ENCODE measurements at regions of chr5 and their contacts with region 1.

Region 1: GRCh38 chr5:120507197-120507596 is 43.1 kb downstream of the PRR16 start:
- DNase-seq: no peak
- H3K4me3 ChIP-seq: no peak overlapping the region
- H3K27ac ChIP-seq: no peak overlapping the region
- H3K4me1 ChIP-seq: no peaks in the 10 kb centered on the region
- H3K27me3 ChIP-seq: no peaks in the 10 kb centered on the region
- CTCF ChIP-seq: no peak

Region 2: GRCh38 chr5:119852140-119852539 is 655.1 kb before region 1 on chr5:
- CTCF ChIA-PET with region 1: no interaction called
- POLR2A ChIA-PET with region 1: no interaction called
- intact Hi-C with region 1: no loop called
- DNase-seq: no peak
- H3K4me3 ChIP-seq: no peak overlapping the region
- H3K27ac ChIP-seq: no peak overlapping the region
- H3K4me1 ChIP-seq: no peaks in the 10 kb centered on the region
- H3K27me3 ChIP-seq: no peaks in the 10 kb centered on the region
- CTCF ChIP-seq: no peak

Region 3: DNA sequence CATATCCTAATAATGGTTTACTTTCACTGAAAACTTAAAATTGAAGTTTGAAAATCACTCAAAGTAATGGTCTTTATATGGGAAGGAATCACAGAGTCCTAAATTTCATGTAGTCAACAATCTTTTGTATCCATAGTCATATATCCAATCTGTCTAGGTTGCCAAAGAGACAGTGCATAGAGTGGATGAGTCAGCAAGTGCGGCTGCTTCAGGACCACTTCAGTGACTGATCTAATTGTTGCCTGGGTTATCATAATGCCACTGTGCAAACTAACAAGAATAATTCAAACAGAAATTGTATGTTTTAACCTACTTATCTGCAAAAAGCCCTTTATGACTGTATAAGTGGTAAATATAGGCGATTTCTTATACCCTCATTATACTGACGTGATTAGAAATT is 254.4 kb before region 1 on chr5:
- CTCF ChIA-PET with region 1: no interaction called
- POLR2A ChIA-PET with region 1: no interaction called
- intact Hi-C with region 1: no loop called
- DNase-seq: peak; percentile 5
- H3K4me3 ChIP-seq: no peak overlapping the region
- H3K27ac ChIP-seq: no peak overlapping the region
- H3K4me1 ChIP-seq: no peaks in the 10 kb centered on the region
- H3K27me3 ChIP-seq: no peaks in the 10 kb centered on the region
- CTCF ChIP-seq: no peak

Region 4: DNA sequence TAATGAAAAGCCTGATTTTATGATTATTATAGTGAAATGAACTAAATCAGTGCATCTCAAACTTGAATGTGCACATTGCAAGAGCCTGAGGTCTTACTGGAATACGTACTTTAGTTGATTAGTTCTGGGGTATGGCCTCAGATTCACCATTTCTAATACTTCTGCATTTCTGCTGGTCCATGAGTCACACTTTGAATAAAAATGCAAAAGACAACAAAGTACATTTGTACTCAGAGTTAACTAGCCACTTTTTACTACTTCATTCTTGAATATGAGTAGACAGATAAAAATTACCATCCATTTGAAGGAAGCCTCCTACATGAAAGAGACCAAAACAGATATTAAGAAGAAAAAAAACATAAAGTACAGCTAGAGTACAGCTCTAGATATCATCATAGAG is 70.2 kb before region 1 on chr5:
- CTCF ChIA-PET with region 1: no interaction called
- POLR2A ChIA-PET with region 1: no interaction called
- intact Hi-C with region 1: no loop called
- DNase-seq: no peak
- H3K4me3 ChIP-seq: no peak overlapping the region
- H3K27ac ChIP-seq: no peak overlapping the region
- H3K4me1 ChIP-seq: no peaks in the 10 kb centered on the region
- H3K27me3 ChIP-seq: no peaks in the 10 kb centered on the region
- CTCF ChIP-seq: no peak

Region 5: GRCh38 chr5:121755266-121755665 is 1248.1 kb after region 1 on chr5:
- CTCF ChIA-PET with region 1: interaction called, 10 read pairs
- POLR2A ChIA-PET with region 1: no interaction called
- intact Hi-C with region 1: no loop called
- DNase-seq: no peak
- H3K4me3 ChIP-seq: no peak overlapping the region
- H3K27ac ChIP-seq: no peak overlapping the region
- H3K4me1 ChIP-seq: no peaks in the 10 kb centered on the region
- H3K27me3 ChIP-seq: no peaks in the 10 kb centered on the region
- CTCF ChIP-seq: no peak